Activated B cell treated with CpG ODN at 0.5 μM for 24 hours (primary cell): ENCODE measurements at regions of chr2 and their contacts with region 1.

Region 1: GRCh38 chr2:112726497-112727190 is 5.8 kb downstream of the NT5DC4 start:
- DNase-seq: peak; percentile 83
- ATAC-seq: peak; percentile 91
- H3K4me3 Mint-ChIP-seq: peak overlapping the region; percentile 32
- H3K27ac Mint-ChIP-seq: peak overlapping the region; percentile 66
- H3K4me1 Mint-ChIP-seq: peaks cover 20% of the 10 kb centered on the region
- H3K27me3 Mint-ChIP-seq: no peaks in the 10 kb centered on the region
- CTCF ChIP-seq: peak; percentile 75

Region 2: DNA sequence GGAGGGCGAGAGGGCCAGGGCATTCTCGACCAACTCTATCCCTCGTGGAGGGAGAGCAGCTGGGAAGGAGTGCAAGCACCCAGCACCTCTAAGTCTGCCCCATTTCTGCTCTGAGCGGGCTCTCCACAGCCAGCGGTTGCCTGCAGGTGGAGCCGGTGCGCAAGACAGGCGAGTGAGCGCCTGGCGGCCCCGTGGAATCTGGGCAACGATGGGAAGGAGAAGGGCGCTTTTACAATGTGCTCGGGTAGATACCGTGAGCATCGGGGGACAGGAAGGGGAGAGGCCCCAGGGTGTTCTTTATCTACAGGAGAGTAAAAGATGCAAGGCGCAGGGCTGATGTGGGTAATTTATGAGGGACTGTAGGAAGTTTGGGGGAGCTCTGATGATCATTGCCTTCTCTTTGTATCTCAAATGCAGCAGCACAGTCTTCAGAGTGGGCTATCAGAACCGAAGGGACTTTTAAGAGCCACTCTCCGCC is 245.6 kb before region 1 on chr2:
- CTCF ChIA-PET with region 1: interaction called, 6 read pairs
- POLR2A ChIA-PET with region 1: no interaction called
- intact Hi-C with region 1: loop called (anchors 1 kb)
- DNase-seq: peak; percentile 71
- ATAC-seq: peak; percentile 73
- H3K4me3 Mint-ChIP-seq: peak overlapping the region; percentile 98
- H3K27ac Mint-ChIP-seq: peak overlapping the region; percentile 97
- H3K4me1 Mint-ChIP-seq: peaks cover 22% of the 10 kb centered on the region
- H3K27me3 Mint-ChIP-seq: no peaks in the 10 kb centered on the region
- CTCF ChIP-seq: no peak

Region 3: DNA sequence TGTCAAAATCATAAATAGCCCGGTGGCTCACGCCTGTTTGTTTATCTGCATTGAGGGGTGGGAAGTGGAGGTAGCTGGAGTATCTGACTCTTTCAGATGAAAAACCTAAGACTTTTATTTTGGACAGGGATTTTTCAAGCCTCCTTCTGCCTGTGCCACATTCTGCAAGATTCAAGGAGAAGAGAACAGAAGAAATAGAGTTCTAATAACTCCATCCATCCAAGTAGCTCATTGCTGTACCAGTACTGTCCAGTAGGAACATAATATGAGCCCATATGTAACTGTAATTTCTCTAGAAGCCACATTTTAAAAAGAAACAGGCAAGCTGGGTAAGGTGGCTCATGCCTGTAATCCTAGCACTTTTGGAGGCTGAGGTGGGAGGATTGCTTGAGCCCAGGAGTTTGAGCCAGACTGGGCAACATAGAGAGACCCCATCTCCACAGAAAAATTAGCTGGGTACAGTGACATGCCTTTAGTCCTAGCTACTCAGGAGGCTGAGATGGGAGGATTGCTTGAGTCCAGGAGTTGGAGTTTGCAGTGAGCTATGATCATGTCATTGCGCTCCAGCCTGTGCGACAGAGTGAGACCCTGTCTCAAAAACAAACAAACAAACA is 41.3 kb before region 1 on chr2:
- CTCF ChIA-PET with region 1: interaction called, 47 read pairs
- POLR2A ChIA-PET with region 1: interaction called, 3 read pairs
- intact Hi-C with region 1: no loop called
- DNase-seq: no peak
- ATAC-seq: no peak
- H3K4me3 Mint-ChIP-seq: no peak overlapping the region
- H3K27ac Mint-ChIP-seq: no peak overlapping the region
- H3K4me1 Mint-ChIP-seq: peaks cover 14% of the 10 kb centered on the region
- H3K27me3 Mint-ChIP-seq: no peaks in the 10 kb centered on the region
- CTCF ChIP-seq: no peak

Region 4: DNA sequence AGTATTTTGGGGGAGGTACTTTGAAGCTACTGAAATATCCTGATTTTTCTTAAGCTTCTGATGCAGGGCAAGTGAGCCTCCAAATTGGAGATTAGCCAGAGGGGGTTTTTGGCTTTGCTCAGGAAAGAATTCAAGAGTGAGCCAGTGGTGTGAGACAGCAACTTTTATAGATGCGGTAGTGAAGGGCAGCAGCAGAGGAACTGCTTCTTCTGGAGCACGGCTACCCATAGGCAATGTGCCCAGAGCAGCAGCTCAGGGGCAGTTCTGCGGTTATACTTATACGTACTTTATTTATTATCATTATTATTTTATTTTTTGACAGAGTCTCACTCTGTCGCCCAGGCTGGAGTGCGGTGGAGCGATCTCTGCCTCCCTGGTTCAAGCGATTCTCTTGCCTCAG is 25.6 kb before region 1 on chr2:
- CTCF ChIA-PET with region 1: interaction called, 20 read pairs
- POLR2A ChIA-PET with region 1: interaction called, 7 read pairs
- intact Hi-C with region 1: no loop called
- DNase-seq: no peak
- ATAC-seq: peak; percentile 27
- H3K4me3 Mint-ChIP-seq: peak overlapping the region; percentile 0
- H3K27ac Mint-ChIP-seq: peak overlapping the region; percentile 83
- H3K4me1 Mint-ChIP-seq: peaks cover 65% of the 10 kb centered on the region
- H3K27me3 Mint-ChIP-seq: no peaks in the 10 kb centered on the region
- CTCF ChIP-seq: no peak

Region 5: DNA sequence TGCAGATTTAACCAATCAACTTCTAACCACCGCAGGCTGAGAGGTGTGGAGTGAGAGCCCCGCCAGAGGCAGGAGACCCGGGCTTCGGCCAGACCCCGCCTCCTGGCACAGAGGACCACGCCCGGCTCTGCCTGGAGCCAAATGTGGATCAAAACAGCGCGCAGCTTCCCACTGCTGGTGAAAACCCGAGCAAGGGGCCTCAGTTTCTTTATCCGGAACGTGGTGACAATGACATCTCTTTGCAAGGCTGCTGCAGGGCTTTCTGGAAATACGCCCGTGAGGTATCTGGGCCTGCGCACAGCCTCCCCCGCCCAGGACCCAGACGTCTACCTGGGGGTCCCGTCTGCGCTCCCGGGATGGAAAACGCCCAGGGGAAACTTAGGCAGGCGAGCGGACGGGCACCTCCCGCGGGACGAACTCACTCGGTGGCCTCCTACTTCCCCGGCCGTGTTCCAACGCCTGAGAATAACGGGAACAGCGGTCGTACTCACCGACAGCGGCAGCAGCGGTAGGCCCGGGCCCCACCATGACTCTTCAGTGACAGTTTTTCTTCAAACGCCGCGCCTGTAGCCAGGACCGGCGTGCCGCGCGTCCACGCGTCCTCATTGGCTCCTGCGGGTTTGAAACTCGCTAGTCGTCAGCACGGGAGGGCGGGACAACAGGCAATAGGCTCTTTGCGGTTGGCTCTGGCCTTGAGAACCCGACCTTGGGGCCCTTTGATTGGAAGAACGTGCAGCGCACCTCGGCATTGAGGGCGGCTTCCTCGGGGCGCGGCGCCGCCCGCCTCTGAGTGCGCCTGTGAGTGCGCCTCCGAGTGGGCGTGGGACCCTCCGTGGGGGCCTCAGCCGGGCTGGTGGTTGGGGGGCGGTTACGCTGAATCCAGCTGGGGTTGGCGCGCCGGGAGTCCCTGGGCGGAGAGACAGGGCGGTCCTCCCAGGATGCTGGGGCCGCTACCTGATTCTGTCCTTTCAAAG is 37.7 kb after region 1 on chr2 and contains the start of gene CKAP2L:
- CTCF ChIA-PET with region 1: no interaction called
- POLR2A ChIA-PET with region 1: no interaction called
- intact Hi-C with region 1: no loop called
- DNase-seq: peak; percentile 87
- ATAC-seq: peak; percentile 100
- H3K4me3 Mint-ChIP-seq: peak within 1 kb of the TSS; percentile 91
- H3K27ac Mint-ChIP-seq: peak within 1 kb of the TSS; percentile 50
- H3K4me1 Mint-ChIP-seq: peaks cover 31% of the 10 kb centered on the region
- H3K27me3 Mint-ChIP-seq: no peaks in the 10 kb centered on the region
- CTCF ChIP-seq: no peak
- total RNA-seq, gene CKAP2L: 1.2 TPM in 2 replicates

Region 6: GRCh38 chr2:112884869-112885505 is 158.3 kb after region 1 on chr2:
- CTCF ChIA-PET with region 1: interaction called, 15 read pairs
- POLR2A ChIA-PET with region 1: interaction called, 3 read pairs
- intact Hi-C with region 1: no loop called
- DNase-seq: peak; percentile 52
- ATAC-seq: peak; percentile 58
- H3K4me3 Mint-ChIP-seq: no peak overlapping the region
- H3K27ac Mint-ChIP-seq: no peak overlapping the region
- H3K4me1 Mint-ChIP-seq: peaks cover 23% of the 10 kb centered on the region
- H3K27me3 Mint-ChIP-seq: no peaks in the 10 kb centered on the region
- CTCF ChIP-seq: peak; percentile 36

Region 7: GRCh38 chr2:114274957-114275356 is 1548.3 kb after region 1 on chr2:
- CTCF ChIA-PET with region 1: no interaction called
- POLR2A ChIA-PET with region 1: no interaction called
- intact Hi-C with region 1: no loop called
- DNase-seq: no peak
- ATAC-seq: no peak
- H3K4me3 Mint-ChIP-seq: no peak overlapping the region
- H3K27ac Mint-ChIP-seq: no peak overlapping the region
- H3K4me1 Mint-ChIP-seq: no peaks in the 10 kb centered on the region
- H3K27me3 Mint-ChIP-seq: no peaks in the 10 kb centered on the region
- CTCF ChIP-seq: no peak